T-cell (primary cell): ENCODE measurements at regions of chr4 and their contacts with region 1.

Region 1: DNA sequence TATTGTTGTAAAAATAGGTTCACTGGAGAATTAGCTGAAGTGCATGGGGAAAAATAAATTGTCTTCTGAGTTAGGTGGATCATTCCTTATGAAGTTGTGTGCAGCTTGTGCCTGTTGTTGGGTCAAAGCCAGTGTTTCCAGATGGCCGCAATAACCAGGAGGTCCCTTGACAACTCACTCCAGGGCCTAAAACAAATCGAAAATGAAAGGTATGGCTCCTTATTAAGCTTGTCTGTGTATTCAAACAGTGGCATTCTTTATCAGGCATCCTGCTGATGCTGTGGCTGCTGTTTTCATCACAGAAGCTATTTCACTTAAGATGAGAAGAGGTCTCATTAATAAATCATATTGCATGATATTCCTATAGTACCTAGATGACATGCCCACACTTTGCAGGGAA is 80.2 kb downstream of the GRIA2 start:
- DNase-seq: no peak
- ATAC-seq: no peak
- H3K4me3 ChIP-seq: no peak overlapping the region
- H3K4me3 Mint-ChIP-seq: no peak overlapping the region
- H3K27ac ChIP-seq: no peak overlapping the region
- H3K27ac Mint-ChIP-seq: no peak overlapping the region
- H3K4me1 ChIP-seq: no peaks in the 10 kb centered on the region
- H3K4me1 Mint-ChIP-seq: no peaks in the 10 kb centered on the region
- H3K27me3 ChIP-seq: no peaks in the 10 kb centered on the region
- H3K27me3 Mint-ChIP-seq: no peaks in the 10 kb centered on the region

Region 2: GRCh38 chr4:157405070-157405469 is 104.4 kb after region 1 on chr4:
- CTCF ChIA-PET with region 1: interaction called in 1 of 2 experiments, 13 read pairs
- POLR2A ChIA-PET with region 1: no interaction called
- DNase-seq: no peak
- ATAC-seq: no peak
- H3K4me3 ChIP-seq: no peak overlapping the region
- H3K4me3 Mint-ChIP-seq: no peak overlapping the region
- H3K27ac ChIP-seq: no peak overlapping the region
- H3K27ac Mint-ChIP-seq: no peak overlapping the region
- H3K4me1 ChIP-seq: no peaks in the 10 kb centered on the region
- H3K4me1 Mint-ChIP-seq: no peaks in the 10 kb centered on the region
- H3K27me3 ChIP-seq: no peaks in the 10 kb centered on the region
- H3K27me3 Mint-ChIP-seq: no peaks in the 10 kb centered on the region

Region 3: DNA sequence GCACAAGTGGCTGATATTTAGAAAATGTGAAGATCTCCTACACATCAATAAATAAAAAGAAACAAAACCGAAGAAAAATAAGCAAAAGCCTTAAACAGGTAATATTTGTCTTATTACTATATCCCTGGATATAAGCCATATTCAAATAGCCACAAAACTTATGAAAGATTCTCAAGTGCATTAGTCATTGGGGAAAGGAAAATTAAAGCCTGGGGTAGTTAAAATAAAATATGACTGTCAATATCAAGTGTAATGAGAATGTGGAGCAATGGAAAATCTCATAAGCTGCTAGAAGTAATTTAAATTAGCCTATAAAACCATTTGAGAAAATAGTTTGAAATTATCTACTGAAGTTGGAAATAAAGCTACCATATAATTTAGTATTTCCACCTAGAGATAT is 472.2 kb after region 1 on chr4:
- CTCF ChIA-PET with region 1: no interaction called
- POLR2A ChIA-PET with region 1: no interaction called
- DNase-seq: no peak
- ATAC-seq: no peak
- H3K4me3 ChIP-seq: no peak overlapping the region
- H3K4me3 Mint-ChIP-seq: no peak overlapping the region
- H3K27ac ChIP-seq: no peak overlapping the region
- H3K27ac Mint-ChIP-seq: no peak overlapping the region
- H3K4me1 ChIP-seq: no peaks in the 10 kb centered on the region
- H3K4me1 Mint-ChIP-seq: no peaks in the 10 kb centered on the region
- H3K27me3 ChIP-seq: no peaks in the 10 kb centered on the region
- H3K27me3 Mint-ChIP-seq: no peaks in the 10 kb centered on the region